HCT116 (cell line): ENCODE measurements at regions of chr9 and their contacts with region 1.

Region 1: GRCh38 chr9:126704873-126705766 is 91.4 kb downstream of the LMX1B start:
- DNase-seq: peak; percentile 47
- ATAC-seq: peak; percentile 59
- H3K4me3 ChIP-seq: peak overlapping the region; percentile 15 to 43
- H3K27ac ChIP-seq: no peak overlapping the region; the same call in 1 of the 2 replicates
- H3K4me1 ChIP-seq: peaks cover 15 to 35% of the 10 kb centered on the region in 2 experiments
- H3K27me3 ChIP-seq: no peaks in the 10 kb centered on the region
- CTCF ChIP-seq: peak in 2 of 3 experiments; percentile 80 to 89; a peak in 4 of 6 replicates
- POLR2A ChIP-seq: no peak
- RAD21 ChIP-seq: no peak

Region 2: DNA sequence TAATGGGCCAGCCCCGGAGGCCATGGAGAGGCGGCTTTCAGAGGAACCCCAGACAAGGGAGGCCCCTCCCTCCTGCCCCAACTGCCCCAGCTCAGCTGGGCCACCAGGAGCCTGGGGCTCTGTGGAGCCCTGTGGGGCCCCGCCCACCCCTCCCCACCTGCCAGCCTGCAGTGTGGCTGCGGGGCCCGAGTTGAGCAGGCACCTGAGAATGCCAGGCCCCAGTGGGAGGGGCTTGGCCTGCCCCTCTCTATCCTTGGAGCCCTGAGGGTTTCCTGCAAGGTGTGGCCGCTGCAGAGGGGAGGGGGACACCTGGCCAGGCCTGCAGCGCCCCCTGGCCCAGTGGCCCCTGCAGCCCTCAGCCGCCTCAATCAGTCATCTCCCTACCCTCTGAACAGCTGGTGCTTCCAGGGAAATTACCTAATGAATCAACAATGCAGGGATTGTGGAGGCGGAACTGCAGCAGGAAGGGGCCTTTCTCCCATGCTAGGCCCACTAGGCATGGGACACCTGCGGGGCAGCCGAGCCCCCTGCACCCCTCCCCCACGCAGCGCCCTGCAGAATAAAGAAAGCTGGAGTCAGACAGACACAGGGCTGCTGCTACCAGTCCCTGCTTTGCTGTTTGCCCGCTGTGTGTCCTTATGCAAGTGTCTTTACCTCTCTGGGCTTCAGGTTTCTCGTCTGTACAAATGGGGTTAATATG is 43.4 kb before region 1 on chr9:
- CTCF ChIA-PET with region 1: interaction called, 14 read pairs
- POLR2A ChIA-PET with region 1: no interaction called
- RAD21 ChIA-PET with region 1: no interaction called
- intact Hi-C with region 1: no loop called
- DNase-seq: peak; percentile 12
- ATAC-seq: peak; percentile 61
- H3K4me3 ChIP-seq: no peak overlapping the region
- H3K27ac ChIP-seq: peak overlapping the region; percentile 62
- H3K4me1 ChIP-seq: peaks cover 30 to 45% of the 10 kb centered on the region in 2 experiments
- H3K27me3 ChIP-seq: no peaks in the 10 kb centered on the region
- CTCF ChIP-seq: no peak
- POLR2A ChIP-seq: no peak
- RAD21 ChIP-seq: no peak

Region 3: DNA sequence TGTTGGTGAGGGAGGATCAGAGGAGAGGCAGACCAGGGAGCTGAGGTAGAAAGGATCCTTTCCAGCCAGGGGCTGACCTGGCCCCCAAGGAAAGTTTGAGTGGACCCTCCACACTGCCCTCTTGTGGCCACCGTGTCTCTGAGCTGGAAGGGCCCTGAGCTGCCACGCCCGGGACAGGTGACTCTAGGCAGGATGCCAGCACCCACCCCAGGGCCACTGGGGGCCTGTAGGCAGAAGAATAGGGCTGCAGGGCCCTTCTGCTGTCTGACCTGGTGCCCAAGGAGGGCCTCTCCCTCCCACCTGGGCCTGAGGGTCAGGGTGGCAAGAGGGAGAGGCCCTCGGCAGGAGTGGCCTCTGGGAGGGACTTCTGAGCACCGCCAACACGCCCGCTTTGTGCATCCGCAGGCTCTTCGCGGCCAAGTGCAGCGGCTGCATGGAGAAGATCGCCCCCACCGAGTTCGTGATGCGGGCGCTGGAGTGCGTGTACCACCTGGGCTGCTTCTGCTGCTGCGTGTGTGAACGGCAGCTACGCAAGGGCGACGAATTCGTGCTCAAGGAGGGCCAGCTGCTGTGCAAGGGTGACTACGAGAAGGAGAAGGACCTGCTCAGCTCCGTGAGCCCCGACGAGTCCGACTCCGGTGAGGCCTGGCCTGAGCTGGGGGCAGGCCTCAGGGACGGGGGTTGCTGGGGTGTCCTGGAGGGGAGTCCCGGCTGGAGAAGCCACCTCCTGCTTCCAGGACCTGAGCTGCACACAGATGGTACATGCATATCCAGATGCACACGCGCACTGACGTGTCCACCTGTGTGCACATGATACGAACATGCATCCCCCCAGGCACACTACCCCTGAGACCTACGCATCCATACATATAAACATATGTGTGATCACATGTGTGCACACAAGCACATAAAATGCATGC is 14.4 kb before region 1 on chr9:
- CTCF ChIA-PET with region 1: interaction called, 47 read pairs
- POLR2A ChIA-PET with region 1: no interaction called
- RAD21 ChIA-PET with region 1: interaction called, 3 to 4 read pairs
- intact Hi-C with region 1: no loop called
- DNase-seq: peak; percentile 24
- ATAC-seq: peak; percentile 87
- H3K4me3 ChIP-seq: no peak overlapping the region
- H3K27ac ChIP-seq: no peak overlapping the region
- H3K4me1 ChIP-seq: 0 out of 4 replicates have a peak, but pooled peaks cover 0 to 3% of the 10 kb centered on the region in 2 experiments
- H3K27me3 ChIP-seq: no peaks in the 10 kb centered on the region
- CTCF ChIP-seq: peak; percentile 71 to 86 (median 78)
- POLR2A ChIP-seq: no peak
- RAD21 ChIP-seq: peak; percentile 59

Region 4: GRCh38 chr9:126715382-126715781 is 10.3 kb after region 1 on chr9:
- CTCF ChIA-PET with region 1: interaction called, 31 read pairs
- POLR2A ChIA-PET with region 1: no interaction called
- RAD21 ChIA-PET with region 1: no interaction called
- intact Hi-C with region 1: no loop called
- DNase-seq: no peak
- ATAC-seq: no peak
- H3K4me3 ChIP-seq: no peak overlapping the region
- H3K27ac ChIP-seq: no peak overlapping the region
- H3K4me1 ChIP-seq: peaks cover 9% of the 10 kb centered on the region in 2 experiments; a peak in 3 of 4 replicates
- H3K27me3 ChIP-seq: no peaks in the 10 kb centered on the region
- CTCF ChIP-seq: no peak
- POLR2A ChIP-seq: no peak
- RAD21 ChIP-seq: no peak

Region 5: GRCh38 chr9:126722252-126723078 is 17.3 kb after region 1 on chr9:
- CTCF ChIA-PET with region 1: interaction called, 31 read pairs
- POLR2A ChIA-PET with region 1: interaction called, 3 read pairs
- RAD21 ChIA-PET with region 1: no interaction called
- intact Hi-C with region 1: no loop called
- DNase-seq: peak; percentile 36
- ATAC-seq: peak; percentile 89
- H3K4me3 ChIP-seq: peak overlapping the region; percentile 54 to 68
- H3K27ac ChIP-seq: peak overlapping the region; percentile 66
- H3K4me1 ChIP-seq: peaks cover 19 to 35% of the 10 kb centered on the region in 2 experiments
- H3K27me3 ChIP-seq: no peaks in the 10 kb centered on the region
- CTCF ChIP-seq: no peak
- POLR2A ChIP-seq: no peak
- RAD21 ChIP-seq: no peak

Region 6: GRCh38 chr9:126773004-126773607 is 68.0 kb after region 1 on chr9:
- CTCF ChIA-PET with region 1: interaction called, 340 read pairs
- POLR2A ChIA-PET with region 1: interaction called, 3 read pairs
- RAD21 ChIA-PET with region 1: interaction called in 1 of 2 experiments, 3 read pairs
- intact Hi-C with region 1: loop called (anchors 1 kb)
- DNase-seq: no peak
- ATAC-seq: peak; percentile 66
- H3K4me3 ChIP-seq: no peak overlapping the region
- H3K27ac ChIP-seq: no peak overlapping the region
- H3K4me1 ChIP-seq: peaks cover 0 to 5% of the 10 kb centered on the region in 2 experiments; a peak in 2 of 4 replicates
- H3K27me3 ChIP-seq: no peaks in the 10 kb centered on the region
- CTCF ChIP-seq: peak in 2 of 3 experiments; percentile 60 to 66; a peak in 4 of 6 replicates
- POLR2A ChIP-seq: no peak
- RAD21 ChIP-seq: peak; percentile 26; the same call in 1 of the 2 replicates

Region 7: GRCh38 chr9:127754099-127755050 is 1049.3 kb after region 1 on chr9:
- CTCF ChIA-PET with region 1: no interaction called
- POLR2A ChIA-PET with region 1: no interaction called
- RAD21 ChIA-PET with region 1: no interaction called
- intact Hi-C with region 1: no loop called
- DNase-seq: no peak
- ATAC-seq: peak; percentile 87
- H3K4me3 ChIP-seq: no peak overlapping the region
- H3K27ac ChIP-seq: no peak overlapping the region
- H3K4me1 ChIP-seq: no peaks in the 10 kb centered on the region
- H3K27me3 ChIP-seq: no peaks in the 10 kb centered on the region
- CTCF ChIP-seq: no peak
- POLR2A ChIP-seq: no peak
- RAD21 ChIP-seq: no peak